ENCODE measurements at regions of chr17 and their contacts with region 1.

Region 1: GRCh38 chr17:59329638-59330313 is 1.7 kb upstream of the YPEL2 start:
- DNase-seq: no peak
- ATAC-seq: peak; percentile 70

Region 2: GRCh38 chr17:59361916-59362810 is 32.4 kb after region 1 on chr17:
- intact Hi-C with region 1: loop called (anchors 2 kb)
- DNase-seq: no peak
- ATAC-seq: no peak

Region 3: GRCh38 chr17:59427425-59427921 is 97.7 kb after region 1 on chr17:
- intact Hi-C with region 1: loop called (anchors 1 kb)
- DNase-seq: no peak
- ATAC-seq: peak; percentile 42

Region 4: DNA sequence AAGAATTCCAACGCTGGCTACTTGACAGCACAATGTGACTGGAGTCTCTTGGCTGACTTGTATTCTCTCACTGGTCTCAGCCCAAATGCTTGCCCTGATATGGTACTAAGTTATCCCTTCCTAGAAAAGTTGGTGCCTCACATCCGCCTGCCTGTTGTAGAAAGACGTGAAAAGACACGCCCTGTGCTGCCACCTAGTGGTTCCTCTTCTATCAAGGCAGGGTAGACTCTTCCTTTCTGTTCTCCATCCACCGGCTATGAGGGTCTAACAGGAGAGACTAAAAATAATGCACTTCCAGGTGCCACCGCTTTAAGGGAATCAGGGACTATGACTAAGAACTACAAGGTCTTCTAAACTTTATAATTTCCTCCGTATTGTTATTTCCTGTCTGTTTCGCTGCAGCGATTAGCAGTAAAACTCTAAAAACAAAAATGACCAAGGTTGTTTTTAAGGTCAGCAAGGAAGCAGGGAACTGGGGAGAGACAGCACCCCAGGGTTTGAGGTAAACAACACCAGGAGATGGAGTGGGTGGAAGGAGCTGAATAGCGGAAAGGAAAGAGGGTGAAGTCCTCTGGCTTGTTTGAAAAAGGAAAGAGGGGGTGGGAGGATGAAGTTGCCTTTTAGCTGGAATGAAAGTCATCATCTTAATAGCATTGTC is 111.1 kb after region 1 on chr17:
- intact Hi-C with region 1: loop called (anchors 1 kb)
- DNase-seq: peak; percentile 90
- ATAC-seq: peak; percentile 92

Region 5: GRCh38 chr17:59521204-59522126 is 191.7 kb after region 1 on chr17:
- intact Hi-C with region 1: loop called (anchors 5 kb)
- DNase-seq: no peak
- ATAC-seq: peak; percentile 63

Measured in Right ventricle myocardium inferior (tissue), 1 donor.